ENCODE measurements at regions of chr16 and their contacts with region 1.

Region 1: GRCh38 chr16:1705688-1706385 is at the start of gene MAPK8IP3:
- DNase-seq: peak; percentile 98
- ATAC-seq: peak; percentile 84
- H3K4me3 ChIP-seq: peak within 1 kb of the TSS; percentile 75 to 98 (median 96)
- H3K4me3 Mint-ChIP-seq: peak within 1 kb of the TSS; percentile 98
- H3K27ac ChIP-seq: peak within 1 kb of the TSS; percentile 89 to 91
- H3K27ac Mint-ChIP-seq: peak within 1 kb of the TSS; percentile 98
- H3K4me1 ChIP-seq: peaks cover 14 to 30% of the 10 kb centered on the region in 2 donors
- H3K4me1 Mint-ChIP-seq: peaks cover 40% of the 10 kb centered on the region
- H3K27me3 ChIP-seq: no peaks in the 10 kb centered on the region
- H3K27me3 Mint-ChIP-seq: no peaks in the 10 kb centered on the region
- CTCF ChIP-seq: peak; percentile 89
- total RNA-seq, gene MAPK8IP3: 340 and 348 TPM in 2 replicates

Region 2: DNA sequence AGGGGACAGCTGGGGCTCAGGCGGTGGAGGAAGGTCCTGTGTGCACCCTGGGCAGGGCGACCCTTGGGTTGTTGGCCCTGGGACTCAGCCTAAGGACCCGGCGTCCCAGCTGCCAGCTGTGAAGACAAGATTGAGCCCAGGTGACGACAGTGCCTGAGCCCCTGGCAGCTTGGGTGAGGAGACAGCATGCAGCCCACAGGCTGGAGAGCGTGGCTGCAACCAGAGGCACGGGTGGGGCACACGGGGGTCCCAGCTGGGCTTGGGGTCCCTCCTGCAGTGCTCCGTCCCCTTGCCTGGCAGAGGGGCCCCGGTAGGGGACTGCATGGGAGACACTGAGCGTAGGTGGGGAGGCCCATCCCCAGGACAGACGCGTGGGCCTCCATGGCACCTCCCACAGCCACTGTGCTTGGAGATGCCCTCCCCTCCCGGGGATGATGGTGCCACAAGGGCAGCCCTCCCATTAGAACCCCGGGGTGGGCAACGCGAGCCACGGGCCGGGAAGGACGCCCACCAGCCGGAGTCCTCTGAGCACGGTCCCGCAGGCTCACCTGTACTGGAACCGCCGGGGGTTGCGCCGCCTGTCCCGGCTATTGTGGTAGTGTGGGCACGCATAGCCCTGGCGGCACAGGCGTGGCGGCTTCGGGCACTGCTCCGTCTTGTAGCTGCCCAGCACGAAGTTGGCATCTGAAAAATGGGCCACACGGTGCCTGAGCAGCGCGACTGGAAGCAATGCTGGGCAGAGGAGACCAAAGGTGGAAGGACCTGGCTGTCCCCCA is 306.8 kb before region 1 on chr16:
- CTCF ChIA-PET with region 1: no interaction called
- POLR2A ChIA-PET with region 1: no interaction called
- intact Hi-C with region 1: no loop called
- DNase-seq: no peak
- ATAC-seq: no peak
- H3K4me3 ChIP-seq: no peak overlapping the region
- H3K4me3 Mint-ChIP-seq: no peak overlapping the region
- H3K27ac ChIP-seq: no peak overlapping the region
- H3K27ac Mint-ChIP-seq: no peak overlapping the region
- H3K4me1 ChIP-seq: no peaks in the 10 kb centered on the region
- H3K4me1 Mint-ChIP-seq: peaks cover 3% of the 10 kb centered on the region
- H3K27me3 ChIP-seq: no peaks in the 10 kb centered on the region
- H3K27me3 Mint-ChIP-seq: no peaks in the 10 kb centered on the region
- CTCF ChIP-seq: no peak

Region 3: DNA sequence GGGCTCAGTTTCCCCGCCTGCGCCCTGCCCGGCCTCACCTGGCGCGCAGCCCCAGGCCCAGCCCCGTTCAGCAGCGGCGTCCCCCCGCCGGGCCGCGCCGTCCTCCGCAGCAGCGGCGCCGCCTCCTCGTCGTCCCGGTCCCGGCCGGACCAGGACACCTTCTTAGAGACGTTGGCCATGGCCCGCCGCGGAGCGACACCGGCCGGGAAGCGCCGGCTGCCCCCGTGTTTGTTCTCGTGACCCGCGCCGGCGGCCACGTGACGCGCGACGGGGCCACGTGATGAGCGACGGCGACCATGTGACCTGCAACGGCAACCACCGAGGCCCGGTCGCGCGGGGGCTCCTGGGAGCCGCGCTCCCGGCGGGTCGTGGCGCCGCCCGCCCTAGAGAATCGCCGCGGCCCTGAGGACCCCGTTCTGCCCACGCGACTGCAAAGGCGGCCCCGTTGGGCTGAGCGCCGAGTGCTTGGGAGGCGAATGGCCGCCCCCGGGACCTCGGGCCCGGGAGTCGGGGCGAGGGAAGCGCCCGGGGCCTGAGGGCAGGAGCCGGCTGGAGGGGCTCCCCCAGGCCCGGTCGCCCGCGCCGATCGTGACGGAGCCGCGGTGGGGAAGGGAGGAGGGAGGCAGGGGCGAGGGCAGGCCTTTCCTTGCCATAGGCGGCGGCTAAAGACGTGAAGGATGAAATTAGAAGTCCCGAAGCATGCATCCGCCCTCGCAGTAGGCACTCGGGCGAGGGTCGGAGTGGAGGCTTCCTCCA is 230.9 kb before region 1 on chr16 and contains the start of gene CLCN7:
- CTCF ChIA-PET with region 1: no interaction called
- POLR2A ChIA-PET with region 1: no interaction called
- intact Hi-C with region 1: loop called (anchors 1 kb)
- DNase-seq: peak; percentile 95
- ATAC-seq: peak; percentile 79
- H3K4me3 ChIP-seq: peak within 1 kb of the TSS; percentile 57 to 80 (median 70)
- H3K4me3 Mint-ChIP-seq: peak within 1 kb of the TSS; percentile 88
- H3K27ac ChIP-seq: peak within 1 kb of the TSS; percentile 88 to 96
- H3K27ac Mint-ChIP-seq: peak within 1 kb of the TSS; percentile 93
- H3K4me1 ChIP-seq: peaks cover 50 to 62% of the 10 kb centered on the region in 2 donors
- H3K4me1 Mint-ChIP-seq: peaks cover 54% of the 10 kb centered on the region
- H3K27me3 ChIP-seq: no peaks in the 10 kb centered on the region
- H3K27me3 Mint-ChIP-seq: no peaks in the 10 kb centered on the region
- CTCF ChIP-seq: no peak
- total RNA-seq, gene CLCN7: 274 and 286 TPM in 2 replicates

Region 4: DNA sequence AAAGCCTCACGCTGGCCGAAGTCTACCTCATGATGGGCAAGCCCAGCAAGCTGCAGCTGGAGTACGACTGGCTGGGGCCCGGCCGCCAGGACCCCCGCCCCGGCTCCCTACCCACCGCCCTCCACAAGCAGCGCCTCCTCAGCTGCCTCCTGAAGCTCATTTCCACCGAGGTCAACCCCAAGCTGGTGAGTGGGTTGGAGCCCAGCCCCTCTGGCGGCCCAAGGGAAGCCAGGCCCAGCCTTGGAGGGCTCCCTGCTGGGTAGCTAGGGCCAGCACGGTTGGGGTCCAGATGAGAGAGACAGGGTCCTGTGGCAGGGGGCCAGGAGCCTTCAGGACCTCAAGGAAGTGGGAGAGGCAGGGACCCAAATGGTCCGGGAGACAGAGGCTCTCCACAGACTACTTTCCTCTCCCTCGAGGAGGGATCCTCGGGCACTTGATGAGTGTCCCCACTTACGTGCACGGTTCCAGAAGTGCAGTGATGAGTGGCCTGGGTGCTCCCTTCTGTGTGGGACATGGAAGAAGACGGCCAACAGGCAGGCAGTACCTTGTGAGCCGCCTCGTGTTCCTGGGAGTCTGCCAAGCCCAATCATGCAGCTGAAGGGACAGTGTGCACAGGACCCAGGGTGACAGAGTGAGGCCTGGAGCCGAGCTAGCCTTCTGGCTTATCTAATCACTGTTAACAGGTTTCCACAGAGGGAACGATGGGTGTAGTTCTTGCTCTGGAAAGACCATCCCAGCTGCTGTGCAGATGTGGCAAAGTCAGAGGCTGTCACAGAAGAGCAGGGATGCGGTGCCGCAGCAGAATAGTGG is 48.8 kb before region 1 on chr16:
- CTCF ChIA-PET with region 1: no interaction called
- POLR2A ChIA-PET with region 1: no interaction called
- intact Hi-C with region 1: no loop called
- DNase-seq: no peak
- ATAC-seq: no peak
- H3K4me3 ChIP-seq: no peak overlapping the region
- H3K4me3 Mint-ChIP-seq: no peak overlapping the region
- H3K27ac ChIP-seq: no peak overlapping the region
- H3K27ac Mint-ChIP-seq: no peak overlapping the region
- H3K4me1 ChIP-seq: no peaks in the 10 kb centered on the region
- H3K4me1 Mint-ChIP-seq: peaks cover 2% of the 10 kb centered on the region
- H3K27me3 ChIP-seq: no peaks in the 10 kb centered on the region
- H3K27me3 Mint-ChIP-seq: no peaks in the 10 kb centered on the region
- CTCF ChIP-seq: no peak

Region 5: DNA sequence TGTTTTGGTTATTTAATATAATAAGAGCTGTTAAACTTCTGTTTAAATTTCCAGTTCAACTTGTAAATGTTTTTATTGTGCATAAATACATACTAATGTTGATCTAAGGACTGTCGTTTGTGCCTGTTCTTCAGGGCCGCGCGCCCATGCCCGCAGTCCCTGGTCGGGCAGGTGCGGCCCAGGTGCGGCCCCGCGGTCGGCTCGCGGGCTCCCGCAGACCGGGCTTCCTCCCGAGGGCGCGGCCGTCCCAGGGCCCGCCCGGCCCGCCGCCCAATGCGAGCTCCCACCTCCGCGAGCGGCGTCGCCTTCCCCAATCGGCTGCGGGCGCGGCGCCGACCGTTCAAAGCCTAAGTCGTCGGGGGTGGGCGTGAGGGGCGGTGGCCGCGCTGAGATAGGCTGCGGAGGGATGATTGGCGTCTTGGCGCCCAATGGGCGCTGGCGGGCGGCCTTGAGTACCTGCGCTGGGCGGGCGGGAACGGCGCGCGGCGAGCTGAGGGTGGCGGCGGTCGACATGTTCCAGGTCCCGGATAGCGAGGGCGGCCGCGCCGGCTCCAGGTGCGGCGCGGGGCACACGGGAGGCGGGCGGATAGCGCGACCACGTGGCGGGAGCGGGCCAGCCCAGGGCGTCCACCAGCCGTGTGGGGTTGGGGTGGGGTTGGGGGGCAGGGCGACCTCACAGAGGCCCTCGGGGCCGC is 27.9 kb before region 1 on chr16 and contains the start of gene JPT2:
- CTCF ChIA-PET with region 1: interaction called, 16 read pairs
- POLR2A ChIA-PET with region 1: interaction called, 15 read pairs
- intact Hi-C with region 1: loop called (anchors 1 kb)
- DNase-seq: peak; percentile 98
- ATAC-seq: peak; percentile 94
- H3K4me3 ChIP-seq: peak within 1 kb of the TSS; percentile 38 to 77 (median 60)
- H3K4me3 Mint-ChIP-seq: peak within 1 kb of the TSS; percentile 89
- H3K27ac ChIP-seq: peak within 1 kb of the TSS in 1 of 2 donors; percentile 83
- H3K27ac Mint-ChIP-seq: peak within 1 kb of the TSS; percentile 88
- H3K4me1 ChIP-seq: peaks cover 8 to 14% of the 10 kb centered on the region in 2 donors
- H3K4me1 Mint-ChIP-seq: peaks cover 14% of the 10 kb centered on the region
- H3K27me3 ChIP-seq: no peaks in the 10 kb centered on the region
- H3K27me3 Mint-ChIP-seq: no peaks in the 10 kb centered on the region
- CTCF ChIP-seq: no peak
- total RNA-seq, gene JPT2: 42.1 and 45.7 TPM in 2 replicates

Region 6: DNA sequence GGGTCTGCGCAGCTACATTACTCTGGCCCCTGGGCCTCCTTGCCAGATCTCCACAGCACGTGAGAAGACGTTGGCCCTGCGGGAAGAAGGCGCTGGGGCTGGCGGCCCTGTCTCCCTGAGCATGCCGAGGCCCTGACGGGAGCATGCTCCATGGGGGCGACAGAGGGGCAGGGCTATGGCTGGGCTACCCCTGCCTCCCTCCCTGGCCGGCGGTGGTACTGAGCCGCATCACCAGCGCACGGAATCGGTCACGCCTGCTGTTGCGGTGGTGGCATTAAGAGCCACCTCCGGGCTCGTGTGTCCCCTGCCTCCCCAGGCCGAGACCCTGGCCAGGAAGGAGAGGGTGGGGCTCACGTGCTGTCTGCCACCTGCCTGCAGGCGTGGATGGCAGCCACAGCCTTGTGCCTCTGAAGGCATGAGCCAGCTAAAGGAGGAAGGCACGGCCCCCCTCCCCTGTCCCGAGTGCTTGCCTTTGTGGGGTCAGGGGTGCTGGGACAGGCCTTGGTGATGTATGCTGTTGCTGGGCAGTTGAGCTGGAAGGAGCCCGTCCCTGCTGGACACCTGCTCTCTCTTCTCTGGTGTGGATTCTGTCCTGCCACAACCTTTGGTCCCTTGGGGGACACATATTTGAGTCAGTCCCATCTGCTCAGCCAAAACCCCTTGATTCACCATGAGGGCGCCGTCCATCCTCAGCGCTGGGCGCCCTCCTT is 28.4 kb after region 1 on chr16:
- CTCF ChIA-PET with region 1: no interaction called
- POLR2A ChIA-PET with region 1: no interaction called
- intact Hi-C with region 1: no loop called
- DNase-seq: no peak
- ATAC-seq: no peak
- H3K4me3 ChIP-seq: no peak overlapping the region
- H3K4me3 Mint-ChIP-seq: no peak overlapping the region
- H3K27ac ChIP-seq: no peak overlapping the region
- H3K27ac Mint-ChIP-seq: no peak overlapping the region
- H3K4me1 ChIP-seq: no peaks in the 10 kb centered on the region
- H3K4me1 Mint-ChIP-seq: no peaks in the 10 kb centered on the region
- H3K27me3 ChIP-seq: no peaks in the 10 kb centered on the region
- H3K27me3 Mint-ChIP-seq: no peaks in the 10 kb centered on the region
- CTCF ChIP-seq: no peak

Region 7: GRCh38 chr16:1772736-1773584 is 67.1 kb after region 1 on chr16 and contains the starts of genes EME2 and MRPS34:
- CTCF ChIA-PET with region 1: interaction called, 8 read pairs
- POLR2A ChIA-PET with region 1: interaction called, 14 read pairs
- intact Hi-C with region 1: loop called (anchors 2 kb)
- DNase-seq: peak; percentile 89
- ATAC-seq: peak; percentile 61
- H3K4me3 ChIP-seq: peak within 1 kb of the TSS; percentile 53 to 87 (median 82)
- H3K4me3 Mint-ChIP-seq: peak within 1 kb of the TSS; percentile 95
- H3K27ac ChIP-seq: peak within 1 kb of the TSS; percentile 38 to 90
- H3K27ac Mint-ChIP-seq: peak within 1 kb of the TSS; percentile 97
- H3K4me1 ChIP-seq: peaks cover 22 to 40% of the 10 kb centered on the region in 2 donors
- H3K4me1 Mint-ChIP-seq: peaks cover 27% of the 10 kb centered on the region
- H3K27me3 ChIP-seq: no peaks in the 10 kb centered on the region
- H3K27me3 Mint-ChIP-seq: no peaks in the 10 kb centered on the region
- CTCF ChIP-seq: peak; percentile 88
- total RNA-seq, gene EME2: 42.5 and 43.9 TPM in 2 replicates
- total RNA-seq, gene MRPS34: 44.6 and 54.5 TPM in 2 replicates

Region 8: GRCh38 chr16:1971796-1972489 is 266.1 kb after region 1 on chr16 and contains the start of gene TBL3:
- CTCF ChIA-PET with region 1: no interaction called
- POLR2A ChIA-PET with region 1: interaction called, 3 read pairs
- intact Hi-C with region 1: loop called (anchors 5 kb)
- DNase-seq: peak; percentile 98
- ATAC-seq: peak; percentile 98
- H3K4me3 ChIP-seq: peak within 1 kb of the TSS; percentile 86 to 91 (median 87)
- H3K4me3 Mint-ChIP-seq: peak within 1 kb of the TSS; percentile 96
- H3K27ac ChIP-seq: peak within 1 kb of the TSS; percentile 82 to 85
- H3K27ac Mint-ChIP-seq: peak within 1 kb of the TSS; percentile 98
- H3K4me1 ChIP-seq: peaks cover 9 to 19% of the 10 kb centered on the region in 2 donors
- H3K4me1 Mint-ChIP-seq: peaks cover 21% of the 10 kb centered on the region
- H3K27me3 ChIP-seq: peaks cover 0 to 12% (median 1%) of the 10 kb centered on the region in 4 experiments
- H3K27me3 Mint-ChIP-seq: no peaks in the 10 kb centered on the region
- CTCF ChIP-seq: no peak
- total RNA-seq, gene TBL3: 31.9 and 32.2 TPM in 2 replicates

Region 9: DNA sequence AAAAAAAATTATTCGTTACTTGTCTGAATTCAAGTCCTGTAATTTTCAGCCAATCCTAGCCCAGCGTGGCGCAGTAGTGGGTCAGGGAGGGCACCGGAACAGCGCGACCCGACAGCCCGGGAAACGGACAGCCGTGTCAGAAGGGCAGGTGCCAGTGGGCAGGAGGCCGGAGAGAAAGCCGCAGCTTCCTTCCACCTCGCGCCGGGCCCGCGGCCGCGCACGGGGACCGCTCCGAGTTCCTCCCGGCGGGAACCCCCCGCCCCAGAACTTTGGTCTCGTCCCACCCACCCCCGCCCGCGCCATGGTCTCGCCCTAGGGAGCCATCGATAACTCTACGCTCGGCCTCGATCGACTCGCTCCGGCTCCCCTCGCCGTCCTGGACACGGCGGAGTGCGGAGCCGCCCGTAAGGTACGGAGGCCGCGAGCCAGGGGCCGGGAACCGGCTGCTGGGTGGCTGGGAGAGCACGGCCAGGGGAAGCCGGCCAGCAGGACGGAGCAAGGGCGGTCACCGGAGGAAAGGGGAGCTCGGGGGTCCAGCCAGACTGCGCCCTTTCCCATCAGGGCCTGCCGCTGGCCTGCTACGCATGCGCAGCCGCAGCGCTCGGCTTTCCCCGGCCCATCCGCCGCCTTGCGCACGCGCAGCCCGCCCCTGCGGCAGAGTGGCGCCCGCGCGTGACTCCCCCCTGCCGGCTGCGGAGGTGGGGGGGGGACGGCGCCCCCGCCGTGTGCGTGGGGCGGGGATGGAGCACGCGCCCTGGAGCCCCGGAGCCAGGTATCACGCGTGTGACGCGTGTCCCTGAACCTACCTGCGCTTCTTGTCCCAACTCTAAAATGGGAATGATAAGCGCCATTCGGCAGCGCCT is 499.5 kb after region 1 on chr16 and contains the start of gene MLST8:
- CTCF ChIA-PET with region 1: no interaction called
- POLR2A ChIA-PET with region 1: no interaction called
- intact Hi-C with region 1: no loop called
- DNase-seq: peak; percentile 98
- ATAC-seq: peak; percentile 90
- H3K4me3 ChIP-seq: peak within 1 kb of the TSS; percentile 73 to 94 (median 76)
- H3K4me3 Mint-ChIP-seq: peak within 1 kb of the TSS; percentile 87
- H3K27ac ChIP-seq: peak within 1 kb of the TSS; percentile 86 to 89
- H3K27ac Mint-ChIP-seq: peak within 1 kb of the TSS; percentile 94
- H3K4me1 ChIP-seq: peaks cover 12 to 22% of the 10 kb centered on the region in 2 donors
- H3K4me1 Mint-ChIP-seq: peaks cover 21% of the 10 kb centered on the region
- H3K27me3 ChIP-seq: no peaks in the 10 kb centered on the region
- H3K27me3 Mint-ChIP-seq: peaks cover 3% of the 10 kb centered on the region
- CTCF ChIP-seq: peak; percentile 32
- total RNA-seq, gene MLST8: 36.1 and 39.0 TPM in 2 replicates